ENCODE measurements at regions of chr4 and their contacts with region 1.

Region 1: DNA sequence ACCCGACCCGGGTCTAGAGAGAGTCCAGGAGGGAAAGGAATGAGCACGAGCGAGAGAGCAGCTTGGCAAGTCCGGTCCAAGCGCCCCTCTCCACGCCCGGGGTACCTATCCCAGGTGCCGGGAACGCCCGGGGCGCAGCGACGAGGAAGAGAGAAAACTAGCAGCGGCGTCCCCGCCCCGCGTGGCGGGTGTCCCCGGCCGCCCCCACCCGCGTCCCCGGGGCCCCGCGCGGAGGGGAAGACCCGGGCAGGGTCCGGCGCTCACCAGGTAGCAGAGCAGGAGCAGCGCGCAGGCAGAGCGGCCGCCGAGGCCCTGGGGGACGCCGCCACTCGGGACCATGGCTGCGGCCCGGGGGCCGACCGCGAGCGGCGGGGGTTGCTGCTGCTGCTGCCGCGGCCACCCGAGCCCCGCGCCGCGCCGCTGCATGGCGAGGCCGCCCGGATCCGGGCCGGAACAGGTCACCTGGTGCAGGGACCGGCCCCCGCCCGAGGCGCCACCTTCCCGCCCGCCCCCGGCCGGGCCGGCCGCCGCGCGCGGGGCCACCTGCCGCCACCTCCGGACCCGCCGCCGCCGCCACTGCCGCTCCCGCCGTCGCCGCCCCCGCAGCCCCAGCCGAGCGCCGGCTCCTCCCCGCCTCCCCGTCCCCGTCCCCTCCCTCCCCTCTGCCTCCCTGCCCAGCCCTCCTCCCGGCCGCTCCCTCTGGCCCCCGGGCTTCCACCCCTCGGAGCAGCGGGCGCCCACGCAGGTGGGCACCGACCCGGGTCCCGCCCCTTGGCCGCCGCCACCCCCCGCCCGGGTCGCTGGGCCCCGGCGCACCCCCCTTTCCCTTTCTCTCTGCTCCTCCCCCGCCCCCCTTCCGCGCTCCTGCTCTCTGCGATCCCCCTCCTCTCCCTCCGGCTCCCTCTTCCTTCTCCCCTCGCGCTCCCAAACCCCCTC is at the start of gene SEL1L3:
- DNase-seq: no peak
- H3K4me3 ChIP-seq: peak within 1 kb of the TSS; percentile 52 to 92 (median 80)
- H3K27ac ChIP-seq: peak within 1 kb of the TSS; percentile 74
- H3K4me1 ChIP-seq: peaks cover 38% of the 10 kb centered on the region
- H3K27me3 ChIP-seq: no peaks in the 10 kb centered on the region
- CTCF ChIP-seq: no peak
- POLR2A ChIP-seq: no peak
- total RNA-seq, gene SEL1L3: 91.1 and 122 TPM in 2 replicates

Region 2: GRCh38 chr4:25813448-25814106 is 49.1 kb before region 1 on chr4:
- CTCF ChIA-PET with region 1: no interaction called
- POLR2A ChIA-PET with region 1: no interaction called
- dilution Hi-C with region 1: no loop called
- intact Hi-C with region 1: loop called (anchors 2 kb)
- DNase-seq: peak; percentile 12
- H3K4me3 ChIP-seq: no peak overlapping the region
- H3K27ac ChIP-seq: peak overlapping the region; percentile 49
- H3K4me1 ChIP-seq: peaks cover 15% of the 10 kb centered on the region
- H3K27me3 ChIP-seq: no peaks in the 10 kb centered on the region
- CTCF ChIP-seq: no peak
- POLR2A ChIP-seq: no peak

Region 3: GRCh38 chr4:25900310-25900709 is 37.6 kb after region 1 on chr4:
- CTCF ChIA-PET with region 1: no interaction called
- POLR2A ChIA-PET with region 1: no interaction called
- dilution Hi-C with region 1: no loop called
- intact Hi-C with region 1: no loop called
- DNase-seq: no peak
- H3K4me3 ChIP-seq: no peak overlapping the region
- H3K27ac ChIP-seq: no peak overlapping the region
- H3K4me1 ChIP-seq: no peaks in the 10 kb centered on the region
- H3K27me3 ChIP-seq: no peaks in the 10 kb centered on the region
- CTCF ChIP-seq: no peak
- POLR2A ChIP-seq: no peak

Region 4: GRCh38 chr4:25913851-25914669 is 51.4 kb after region 1 on chr4 and contains the start of gene SMIM20:
- CTCF ChIA-PET with region 1: interaction called, 6 read pairs
- POLR2A ChIA-PET with region 1: interaction called, 4 read pairs
- dilution Hi-C with region 1: no loop called
- intact Hi-C with region 1: loop called (anchors 1 kb)
- DNase-seq: peak; percentile 78
- H3K4me3 ChIP-seq: peak within 1 kb of the TSS; percentile 54 to 79 (median 67)
- H3K27ac ChIP-seq: peak within 1 kb of the TSS; percentile 58
- H3K4me1 ChIP-seq: peaks cover 8% of the 10 kb centered on the region
- H3K27me3 ChIP-seq: no peaks in the 10 kb centered on the region
- CTCF ChIP-seq: no peak
- POLR2A ChIP-seq: peak; percentile 85
- total RNA-seq, gene SMIM20: 18.1 and 19.2 TPM in 2 replicates

Measured in endothelial cell of umbilical vein (primary cell).